Testis (tissue), 5 donors: ENCODE measurements at regions of chr9 and their contacts with region 1.

Region 1: DNA sequence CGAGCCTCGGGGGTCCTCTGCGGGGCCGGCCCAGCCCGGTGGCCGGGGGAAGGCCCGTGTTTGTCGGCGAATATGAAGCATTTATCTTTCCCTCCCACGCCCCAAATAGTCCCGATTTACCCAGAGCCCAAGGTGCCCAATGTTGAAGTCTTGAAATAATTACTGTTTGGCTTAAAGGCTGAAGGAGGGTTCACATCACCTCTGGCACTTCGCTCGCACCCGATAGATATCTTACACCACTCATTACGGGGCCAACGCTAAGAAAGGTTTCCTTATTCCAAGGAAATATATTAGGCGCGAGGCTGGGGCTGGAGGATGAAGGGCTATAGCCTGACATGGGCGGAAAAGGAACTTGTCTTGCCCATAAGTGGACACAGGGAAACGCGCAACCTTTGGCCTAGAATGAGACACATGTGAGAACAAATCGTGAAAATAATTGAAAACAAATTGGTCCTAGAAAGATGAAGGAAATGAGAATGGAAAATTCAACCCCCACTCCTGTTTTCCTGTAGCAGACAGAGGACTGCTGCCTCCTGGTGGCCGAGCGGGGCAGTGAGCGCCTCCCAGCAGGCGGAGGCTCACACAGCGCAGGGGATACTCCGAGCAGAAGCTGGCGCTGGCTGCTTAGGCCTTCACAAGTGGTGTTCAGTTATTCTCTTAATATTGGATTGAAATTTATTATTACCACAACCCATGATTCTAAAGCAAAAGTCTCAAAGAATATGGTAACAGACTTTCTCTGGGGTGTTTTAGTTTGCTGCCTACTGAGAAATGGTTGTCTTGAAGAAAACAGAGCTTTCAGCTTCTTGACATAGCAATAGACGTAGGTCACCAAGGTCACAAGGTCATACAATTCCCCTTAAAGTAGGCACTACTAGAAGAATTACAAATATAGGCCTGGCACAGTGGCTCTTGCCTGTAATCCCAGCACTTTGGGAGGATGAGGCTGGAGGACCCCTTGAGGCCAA is 7.9 kb downstream of the CCL21 start:
- DNase-seq: peak; percentile 92
- H3K4me3 ChIP-seq: peak overlapping the region; percentile 60 to 78
- H3K27ac ChIP-seq: peak overlapping the region; percentile 9 to 63
- H3K4me1 ChIP-seq: no peaks in the 10 kb centered on the region
- H3K27me3 ChIP-seq: no peaks in the 10 kb centered on the region
- CTCF ChIP-seq: peak; percentile 83 to 96 (median 96)
- POLR2A ChIP-seq: no peak

Region 2: GRCh38 chr9:34611829-34612630 is 90.0 kb before region 1 on chr9 and contains the start of gene RPP25L:
- intact Hi-C with region 1: loop called (anchors 10 kb)
- DNase-seq: peak; percentile 92
- H3K4me3 ChIP-seq: peak within 1 kb of the TSS; percentile 73 to 76
- H3K27ac ChIP-seq: peak within 1 kb of the TSS; percentile 82 to 92
- H3K4me1 ChIP-seq: peaks cover 11% of the 10 kb centered on the region
- H3K27me3 ChIP-seq: no peaks in the 10 kb centered on the region
- CTCF ChIP-seq: no peak
- POLR2A ChIP-seq: no peak
- total RNA-seq, gene RPP25L: 23.5 to 26.8 TPM